ENCODE measurements at regions of chr6 and their contacts with region 1.

Region 1: DNA sequence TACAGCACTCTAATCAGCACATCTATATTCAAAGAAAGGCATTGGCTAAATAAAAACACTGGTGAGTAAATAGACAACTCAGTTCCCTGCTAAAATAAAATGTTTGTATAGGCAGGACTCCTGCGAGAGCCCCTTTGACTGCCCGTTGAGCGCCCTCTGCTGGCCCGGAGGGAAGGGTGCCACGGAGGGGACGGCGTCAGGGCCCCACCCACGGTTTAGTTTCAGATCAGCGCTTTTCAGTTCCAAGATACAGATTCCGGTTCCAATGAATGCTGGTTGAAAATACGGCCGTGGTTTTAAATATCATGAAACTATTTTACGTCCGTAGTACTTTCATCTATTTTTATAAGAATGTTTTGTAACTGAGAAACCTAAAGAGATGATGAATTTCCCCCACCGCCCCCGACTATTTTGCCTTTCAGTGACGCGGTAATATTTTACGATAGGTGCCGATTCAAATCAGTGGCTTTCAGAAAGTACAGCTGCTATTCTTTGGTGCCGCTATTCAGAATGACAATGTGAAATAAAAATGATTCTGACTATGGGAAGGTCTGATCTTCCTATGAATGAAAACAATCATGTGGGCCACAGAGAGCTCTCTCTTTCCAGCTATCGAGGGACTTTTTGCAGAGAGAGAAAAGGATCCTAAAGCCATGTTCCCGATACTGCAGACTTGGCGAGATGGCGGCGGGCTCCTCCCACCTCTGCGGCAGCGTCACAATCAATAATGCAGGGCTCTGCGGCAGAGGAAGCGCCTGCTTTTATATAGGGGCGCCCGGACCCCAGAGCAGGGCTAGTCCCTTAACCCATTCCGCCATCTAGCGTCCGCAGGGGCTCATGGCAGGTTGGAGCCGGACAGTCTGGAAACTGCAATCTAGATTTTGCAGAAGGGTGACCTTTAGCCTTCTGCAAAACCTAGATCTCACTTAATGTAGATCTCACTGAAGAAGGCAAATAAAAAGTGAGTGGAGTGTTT is 10.6 kb upstream of the CCN6 start:
- H3K4me3 ChIP-seq: peak overlapping the region; percentile 66
- H3K27ac ChIP-seq: peak overlapping the region; percentile 27; the same call in 1 of the 2 replicates
- H3K4me1 ChIP-seq: no peaks in the 10 kb centered on the region
- CTCF ChIP-seq: peak; percentile 86

Region 2: GRCh38 chr6:112010328-112010727 is 33.0 kb before region 1 on chr6:
- CTCF ChIA-PET with region 1: interaction called, 41 read pairs
- POLR2A ChIA-PET with region 1: no interaction called
- H3K4me3 ChIP-seq: no peak overlapping the region
- H3K27ac ChIP-seq: no peak overlapping the region
- H3K4me1 ChIP-seq: peaks cover 5% of the 10 kb centered on the region
- CTCF ChIP-seq: peak; percentile 33

Region 3: GRCh38 chr6:112018619-112019416 is 24.5 kb before region 1 on chr6:
- CTCF ChIA-PET with region 1: interaction called, 13 read pairs
- POLR2A ChIA-PET with region 1: no interaction called
- H3K4me3 ChIP-seq: no peak overlapping the region
- H3K27ac ChIP-seq: no peak overlapping the region
- H3K4me1 ChIP-seq: peaks cover 17% of the 10 kb centered on the region
- CTCF ChIP-seq: no peak

Region 4: GRCh38 chr6:112029045-112029822 is 14.1 kb before region 1 on chr6:
- CTCF ChIA-PET with region 1: interaction called, 88 read pairs
- POLR2A ChIA-PET with region 1: no interaction called
- H3K4me3 ChIP-seq: no peak overlapping the region
- H3K27ac ChIP-seq: no peak overlapping the region
- H3K4me1 ChIP-seq: no peaks in the 10 kb centered on the region
- CTCF ChIP-seq: peak; percentile 47; the same call in 1 of the 2 replicates

Region 5: DNA sequence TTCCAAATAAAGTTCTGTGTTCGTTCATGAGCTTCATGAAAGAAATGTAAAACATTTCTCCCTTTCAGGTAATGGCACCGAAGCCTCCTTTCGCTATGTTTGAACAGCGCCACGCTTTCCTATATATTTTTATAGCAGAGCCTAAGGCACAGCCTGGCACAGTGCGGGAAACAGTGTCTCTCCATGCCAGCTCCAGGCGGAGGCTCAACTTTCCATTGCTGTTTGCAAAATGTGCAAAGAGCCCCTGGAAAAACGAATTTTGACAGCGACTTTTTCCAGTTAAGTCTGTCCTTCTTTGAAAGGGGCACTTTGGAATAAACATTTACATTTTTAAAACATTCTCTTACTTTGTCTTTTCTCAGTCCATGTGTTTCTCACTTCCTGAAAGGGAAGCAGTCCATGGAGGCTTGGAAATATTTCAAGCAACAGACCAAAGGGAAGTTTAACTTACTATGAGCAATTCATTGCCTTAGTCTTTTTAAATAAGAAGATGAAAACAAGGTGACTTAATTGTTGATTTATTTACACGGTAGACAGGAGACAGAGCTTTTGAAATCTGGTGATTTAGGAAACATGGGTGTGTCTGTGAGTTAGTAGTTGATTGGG is 11.3 kb after region 1 on chr6:
- CTCF ChIA-PET with region 1: interaction called, 11 read pairs
- POLR2A ChIA-PET with region 1: no interaction called
- H3K4me3 ChIP-seq: no peak overlapping the region
- H3K27ac ChIP-seq: no peak overlapping the region
- H3K4me1 ChIP-seq: no peaks in the 10 kb centered on the region
- CTCF ChIP-seq: no peak

Region 6: GRCh38 chr6:112203577-112204349 is 160.4 kb after region 1 on chr6:
- CTCF ChIA-PET with region 1: no interaction called
- POLR2A ChIA-PET with region 1: no interaction called
- H3K4me3 ChIP-seq: no peak overlapping the region
- H3K27ac ChIP-seq: peak overlapping the region; percentile 71; the same call in 1 of the 2 replicates
- H3K4me1 ChIP-seq: peaks cover 36% of the 10 kb centered on the region
- CTCF ChIP-seq: no peak

Region 7: DNA sequence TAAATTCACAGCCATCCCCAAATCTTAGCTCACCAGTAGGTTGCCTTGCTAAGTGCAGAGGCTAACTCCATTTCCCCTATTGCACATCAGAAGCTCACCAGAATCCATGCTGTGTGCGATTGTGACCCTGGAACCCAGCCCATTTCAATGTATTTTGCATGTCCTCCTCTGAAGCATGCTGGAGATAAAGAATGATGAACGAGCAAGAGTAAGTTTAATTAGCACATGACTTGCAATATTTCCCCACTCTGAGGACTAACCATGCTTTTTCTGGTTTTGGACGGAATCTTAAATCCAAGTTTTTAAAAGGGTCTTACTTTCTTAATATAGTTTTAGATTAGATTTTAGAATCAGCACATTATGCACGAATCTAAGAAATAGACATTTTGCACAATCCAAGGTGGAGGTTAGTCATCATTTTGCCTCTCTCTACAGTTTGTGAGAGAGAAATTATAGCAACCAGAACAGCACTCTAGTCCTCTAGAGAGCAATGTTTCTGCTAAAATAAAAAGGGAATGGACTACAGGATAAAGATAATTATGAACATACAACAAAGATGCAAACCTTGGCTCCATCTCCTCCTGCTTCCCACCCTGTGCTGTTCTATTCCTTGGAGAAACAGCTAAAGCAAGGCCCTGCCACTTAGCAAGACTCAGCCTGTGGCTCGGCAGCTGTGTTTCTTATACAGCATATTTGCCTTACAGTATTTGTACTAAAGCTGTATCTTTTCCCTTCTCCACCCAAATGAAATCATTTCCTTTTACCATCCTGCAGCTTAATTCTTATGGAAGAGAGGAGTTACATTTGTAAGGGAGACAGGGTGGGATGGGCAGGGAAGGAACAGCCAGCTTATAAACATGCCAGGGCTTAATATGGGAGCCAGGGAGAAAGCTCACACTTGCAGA is 236.0 kb after region 1 on chr6:
- CTCF ChIA-PET with region 1: no interaction called
- POLR2A ChIA-PET with region 1: no interaction called
- H3K4me3 ChIP-seq: no peak overlapping the region
- H3K27ac ChIP-seq: no peak overlapping the region
- H3K4me1 ChIP-seq: peaks cover 9% of the 10 kb centered on the region
- CTCF ChIP-seq: no peak

Region 8: GRCh38 chr6:112606656-112607435 is 563.5 kb after region 1 on chr6:
- CTCF ChIA-PET with region 1: no interaction called
- POLR2A ChIA-PET with region 1: no interaction called
- H3K4me3 ChIP-seq: no peak overlapping the region
- H3K27ac ChIP-seq: no peak overlapping the region
- H3K4me1 ChIP-seq: no peaks in the 10 kb centered on the region
- CTCF ChIP-seq: no peak